ENCODE measurements at regions of chr11 and their contacts with region 1.

Region 1: DNA sequence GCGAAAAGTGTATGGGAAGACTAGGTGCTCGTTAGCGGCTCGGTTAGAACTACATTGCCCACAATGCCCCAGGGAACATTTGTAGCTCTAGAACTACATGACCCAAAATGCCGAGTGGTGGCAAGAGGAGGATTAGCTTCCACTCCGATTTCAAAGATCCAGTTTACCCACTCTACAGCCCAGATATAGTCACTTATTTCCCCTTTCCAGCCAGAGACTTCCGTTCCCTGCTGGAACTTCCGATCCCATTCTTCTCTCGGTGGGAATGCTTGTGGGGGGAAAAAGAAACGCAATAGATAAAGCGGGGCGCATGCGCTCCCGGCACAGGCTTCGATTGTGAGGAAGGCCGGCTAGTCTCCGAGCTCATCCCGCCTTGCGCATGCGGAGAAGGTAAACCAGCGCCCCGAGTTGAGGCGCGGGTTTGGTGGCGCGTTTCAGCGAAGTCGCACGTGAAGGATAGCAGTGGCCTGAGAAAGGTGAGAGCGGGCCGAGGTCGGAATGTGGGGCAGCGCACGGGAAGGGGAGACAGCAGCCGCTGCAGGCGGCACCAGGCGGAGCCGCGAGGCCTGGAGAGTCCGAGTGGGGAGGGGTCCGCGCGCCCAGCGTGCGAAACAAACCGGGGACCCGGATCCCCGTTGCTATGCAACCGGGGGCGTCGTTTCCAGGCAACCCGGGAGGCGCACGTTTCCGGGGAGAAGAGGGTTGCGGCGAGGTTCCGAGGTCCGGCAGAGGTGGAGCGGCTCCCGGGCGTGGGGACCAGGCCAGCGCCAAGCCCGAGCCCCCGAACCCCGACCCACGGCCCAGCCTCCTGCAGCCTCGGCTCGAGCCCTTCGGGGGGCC is at the start of gene TMEM109:
- DNase-seq: peak; percentile 84
- H3K4me3 ChIP-seq: peak within 1 kb of the TSS; percentile 58 to 81 (median 77)
- H3K27ac ChIP-seq: peak within 1 kb of the TSS; percentile 71
- H3K4me1 ChIP-seq: peaks cover 44% of the 10 kb centered on the region
- H3K27me3 ChIP-seq: no peaks in the 10 kb centered on the region
- CTCF ChIP-seq: no peak
- total RNA-seq, gene TMEM109: 19.8 to 44.9 TPM

Region 2: DNA sequence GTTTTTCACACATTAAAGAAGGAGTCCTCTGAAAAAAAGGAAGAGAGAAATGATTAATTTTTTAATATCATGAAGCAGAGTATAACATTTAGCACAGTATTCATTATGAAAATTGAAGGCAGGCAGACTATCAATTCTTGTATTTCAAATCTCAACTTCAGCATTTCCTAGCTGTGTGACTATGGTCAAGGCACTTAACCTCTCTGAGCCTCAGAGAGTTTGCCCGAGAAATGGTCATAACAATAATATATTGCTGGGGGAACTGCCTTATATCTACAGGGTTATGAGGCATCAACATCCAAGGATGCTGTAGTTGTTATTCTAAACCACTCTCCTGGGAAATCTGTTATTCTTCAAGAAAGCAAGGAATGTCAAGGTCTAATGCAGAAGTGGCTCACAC is 188.4 kb before region 1 on chr11:
- CTCF ChIA-PET with region 1: no interaction called
- dilution Hi-C with region 1: no loop called
- in situ Hi-C with region 1: no loop called
- intact Hi-C with region 1: no loop called
- DNase-seq: no peak
- H3K4me3 ChIP-seq: no peak overlapping the region
- H3K27ac ChIP-seq: no peak overlapping the region
- H3K4me1 ChIP-seq: no peaks in the 10 kb centered on the region
- H3K27me3 ChIP-seq: no peaks in the 10 kb centered on the region
- CTCF ChIP-seq: no peak

Region 3: DNA sequence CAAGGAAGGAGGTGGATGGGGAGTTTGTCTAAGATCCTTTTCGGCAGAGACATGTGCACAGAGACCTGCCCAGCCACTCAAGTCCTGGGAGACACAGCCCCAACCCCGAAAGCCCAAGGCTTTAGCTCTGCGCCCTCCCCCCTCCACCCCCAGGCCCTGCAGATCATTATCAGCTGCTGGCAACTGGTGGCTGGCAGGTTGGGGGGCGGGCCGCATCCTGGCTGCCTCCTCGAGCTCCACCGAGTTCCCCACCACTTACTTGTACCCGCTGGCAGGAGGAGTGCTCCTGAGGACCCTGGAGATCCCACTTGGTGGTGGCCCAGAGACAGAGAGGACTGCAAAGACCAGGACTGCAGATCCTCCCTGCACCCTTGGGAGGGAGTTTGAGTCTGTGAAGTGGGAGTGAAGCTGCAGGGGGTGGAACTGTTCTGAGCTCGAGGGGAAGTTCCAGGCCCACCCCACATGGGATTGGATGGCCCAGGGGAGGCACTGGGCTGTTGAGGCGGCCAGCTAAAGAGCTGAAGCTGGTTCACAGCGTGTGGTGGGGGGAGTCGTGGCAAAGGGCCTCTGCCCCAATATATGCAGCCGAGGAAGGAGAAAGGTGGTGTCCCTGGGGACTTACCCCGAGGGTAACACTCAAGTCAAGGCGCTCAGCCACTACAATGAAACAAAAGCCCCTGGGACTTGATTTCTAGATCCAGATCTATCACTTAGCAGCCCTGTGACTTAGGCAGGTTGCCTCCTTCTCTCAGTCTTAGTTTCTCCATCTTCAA is 92.0 kb before region 1 on chr11:
- CTCF ChIA-PET with region 1: no interaction called
- dilution Hi-C with region 1: loop called (anchors 5 kb)
- in situ Hi-C with region 1: no loop called
- intact Hi-C with region 1: no loop called
- DNase-seq: no peak
- H3K4me3 ChIP-seq: no peak overlapping the region
- H3K27ac ChIP-seq: no peak overlapping the region
- H3K4me1 ChIP-seq: no peaks in the 10 kb centered on the region
- H3K27me3 ChIP-seq: peaks cover 4% of the 10 kb centered on the region
- CTCF ChIP-seq: no peak

Region 4: DNA sequence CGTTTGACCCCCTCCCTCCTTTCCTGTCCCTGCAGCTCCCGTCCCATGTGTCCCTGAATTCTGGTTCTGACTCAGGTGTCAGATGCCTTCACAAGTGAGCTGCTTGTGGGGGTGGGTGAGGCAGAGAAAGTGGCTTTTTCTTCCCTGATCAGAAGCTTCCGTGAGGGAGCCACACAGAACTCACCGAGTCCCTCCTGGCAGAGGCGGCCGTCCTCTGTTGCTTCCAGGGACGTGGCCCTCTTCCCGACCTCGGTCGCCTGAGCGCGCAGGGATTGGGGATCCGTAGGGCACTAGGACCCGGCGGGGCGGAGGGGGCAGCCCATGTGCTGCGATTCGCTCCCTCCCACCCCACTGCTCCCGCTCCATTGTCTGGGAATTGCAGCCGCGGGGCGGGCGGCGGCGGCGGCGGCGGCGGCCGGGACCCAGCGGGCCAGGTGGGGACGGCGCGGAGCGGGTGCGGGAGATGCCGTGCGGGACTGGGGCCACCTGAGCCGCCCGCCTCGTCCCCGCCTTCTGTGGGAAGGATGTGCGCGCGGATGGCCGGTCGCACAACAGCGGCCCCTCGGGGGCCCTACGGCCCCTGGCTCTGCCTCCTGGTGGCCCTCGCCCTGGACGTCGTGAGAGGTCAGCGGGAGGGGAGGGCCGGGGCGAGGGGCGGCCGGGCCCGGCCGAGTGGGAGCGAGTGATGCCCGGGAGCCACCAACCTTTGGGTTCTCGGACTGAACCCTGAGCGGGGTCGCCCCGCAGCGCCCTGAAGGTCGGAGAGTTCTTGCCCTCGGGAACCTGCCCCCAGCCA is 10.3 kb after region 1 on chr11 and contains the start of gene TMEM132A:
- CTCF ChIA-PET with region 1: no interaction called
- dilution Hi-C with region 1: no loop called
- in situ Hi-C with region 1: no loop called
- intact Hi-C with region 1: loop called (anchors 1 kb)
- DNase-seq: peak; percentile 70
- H3K4me3 ChIP-seq: peak within 1 kb of the TSS; percentile 62 to 80 (median 70)
- H3K27ac ChIP-seq: peak within 1 kb of the TSS; percentile 34
- H3K4me1 ChIP-seq: peaks cover 27% of the 10 kb centered on the region
- H3K27me3 ChIP-seq: no peaks in the 10 kb centered on the region
- CTCF ChIP-seq: peak in 1 of 2 donors; percentile 4
- total RNA-seq, gene TMEM132A: 48.7 to 114 TPM

Region 5: DNA sequence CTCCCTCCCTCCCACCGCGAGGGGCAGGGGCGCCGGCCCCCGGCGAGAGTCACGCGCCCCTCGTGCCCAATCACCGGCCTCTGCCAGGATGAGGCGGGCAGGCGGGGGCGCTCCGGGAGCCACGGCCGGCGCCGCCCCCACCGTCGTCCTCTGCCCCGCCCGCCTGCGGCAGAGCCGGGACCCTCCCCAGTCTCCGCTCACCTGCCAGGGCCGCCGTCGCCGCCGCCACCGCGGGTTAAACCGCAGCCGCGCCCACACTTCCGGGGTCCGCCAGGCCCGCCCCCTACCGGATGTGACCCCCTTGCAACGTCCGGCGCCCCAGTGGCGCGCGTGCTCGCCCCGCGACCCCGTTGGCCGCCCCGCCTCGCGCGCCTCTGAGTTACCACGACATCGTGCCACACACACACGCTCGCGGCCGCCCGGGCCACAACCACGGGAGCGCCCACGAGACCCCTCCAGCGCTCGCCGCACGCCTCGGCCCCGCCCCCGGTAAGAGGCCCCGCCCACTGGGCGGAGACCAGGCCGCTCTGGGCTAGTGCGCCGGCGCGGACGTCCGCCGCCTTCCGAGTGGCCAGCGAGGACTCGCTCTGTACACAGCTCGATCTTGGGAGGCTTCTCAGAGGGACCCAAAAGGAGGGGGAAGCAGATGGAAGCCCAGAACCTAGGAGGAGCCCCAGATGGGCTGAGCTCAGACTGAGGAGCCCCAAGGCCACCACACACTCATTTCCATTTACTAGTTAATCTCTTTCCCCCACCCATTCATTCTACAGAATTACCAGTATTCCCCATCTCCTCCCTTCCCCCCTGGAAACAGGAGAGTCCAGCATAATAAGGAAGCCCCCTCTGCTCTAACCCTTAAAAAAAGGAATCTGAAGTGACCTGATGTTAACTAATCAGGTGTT is 247.4 kb after region 1 on chr11 and contains the start of gene VPS37C:
- CTCF ChIA-PET with region 1: no interaction called
- dilution Hi-C with region 1: no loop called
- in situ Hi-C with region 1: no loop called
- intact Hi-C with region 1: loop called (anchors 5 kb)
- DNase-seq: peak; percentile 87
- H3K4me3 ChIP-seq: peak within 1 kb of the TSS; percentile 57 to 82 (median 65)
- H3K27ac ChIP-seq: peak within 1 kb of the TSS; percentile 80
- H3K4me1 ChIP-seq: peaks cover 32% of the 10 kb centered on the region
- H3K27me3 ChIP-seq: no peaks in the 10 kb centered on the region
- CTCF ChIP-seq: no peak
- total RNA-seq, gene VPS37C: 10.7 to 17.1 TPM

Region 6: GRCh38 chr11:61392981-61393595 is 479.1 kb after region 1 on chr11:
- CTCF ChIA-PET with region 1: no interaction called
- dilution Hi-C with region 1: no loop called
- in situ Hi-C with region 1: no loop called
- intact Hi-C with region 1: loop called (anchors 10 kb)
- DNase-seq: no peak
- H3K4me3 ChIP-seq: peak overlapping the region; percentile 77 to 81 (median 80)
- H3K27ac ChIP-seq: peak overlapping the region; percentile 25
- H3K4me1 ChIP-seq: peaks cover 14% of the 10 kb centered on the region
- H3K27me3 ChIP-seq: no peaks in the 10 kb centered on the region
- CTCF ChIP-seq: peak; percentile 8 to 38

Measured in mammary epithelial cell (primary cell).